Cardiac septum (tissue), 1 donor: ENCODE measurements at regions of chr4 and their contacts with region 1.

Region 1: GRCh38 chr4:52588097-52588782 is 70.9 kb downstream of the USP46 start:
- DNase-seq: no peak

Region 2: GRCh38 chr4:52507774-52508173 is 80.5 kb before region 1 on chr4:
- intact Hi-C with region 1: no loop called
- DNase-seq: no peak

Region 3: GRCh38 chr4:52545099-52546069 is 42.9 kb before region 1 on chr4:
- intact Hi-C with region 1: loop called (anchors 2 kb)
- DNase-seq: peak; percentile 84

Region 4: DNA sequence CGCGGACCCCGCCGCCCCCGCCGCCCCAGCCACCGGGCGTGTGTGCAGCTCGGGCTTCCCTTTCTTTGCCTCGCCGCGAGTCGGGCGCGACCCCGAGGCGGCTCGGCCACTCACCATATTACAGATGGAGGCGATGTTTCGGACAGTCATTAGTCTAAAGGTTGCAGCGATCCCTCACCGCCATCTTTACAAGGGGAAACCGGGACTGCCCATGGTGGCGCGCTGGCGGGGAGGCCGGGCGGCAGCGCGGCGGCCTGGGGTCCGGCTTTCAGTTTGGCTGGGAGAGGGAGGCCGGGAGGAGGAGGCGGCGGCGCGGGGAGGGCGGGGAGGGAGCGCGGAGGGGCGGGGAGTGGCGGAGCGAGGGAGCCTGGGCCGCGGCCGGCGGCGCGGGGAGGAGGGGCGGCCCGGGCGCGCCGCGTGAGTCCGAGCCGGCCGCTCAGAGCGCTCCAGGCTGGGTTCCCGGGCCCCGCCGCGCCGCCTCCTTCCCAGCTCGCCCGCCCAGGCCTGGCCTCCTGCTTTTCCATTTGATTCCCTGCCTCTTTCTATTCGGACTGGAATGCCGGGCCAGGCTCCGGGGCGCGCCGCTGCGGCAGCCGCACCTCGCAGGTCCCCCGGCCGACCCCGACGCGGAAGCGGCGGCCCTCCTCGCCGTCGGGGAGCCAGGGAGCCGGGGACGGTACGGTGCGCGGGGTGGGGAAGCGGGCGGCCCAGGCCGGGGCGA is 70.9 kb after region 1 on chr4 and contains the start of gene USP46:
- intact Hi-C with region 1: loop called (anchors 5 kb)
- DNase-seq: peak; percentile 90
- total RNA-seq, gene USP46: 111 TPM

Region 5: GRCh38 chr4:52712172-52712990 is 124.1 kb after region 1 on chr4:
- intact Hi-C with region 1: loop called (anchors 5 kb)
- DNase-seq: peak; percentile 98

Region 6: DNA sequence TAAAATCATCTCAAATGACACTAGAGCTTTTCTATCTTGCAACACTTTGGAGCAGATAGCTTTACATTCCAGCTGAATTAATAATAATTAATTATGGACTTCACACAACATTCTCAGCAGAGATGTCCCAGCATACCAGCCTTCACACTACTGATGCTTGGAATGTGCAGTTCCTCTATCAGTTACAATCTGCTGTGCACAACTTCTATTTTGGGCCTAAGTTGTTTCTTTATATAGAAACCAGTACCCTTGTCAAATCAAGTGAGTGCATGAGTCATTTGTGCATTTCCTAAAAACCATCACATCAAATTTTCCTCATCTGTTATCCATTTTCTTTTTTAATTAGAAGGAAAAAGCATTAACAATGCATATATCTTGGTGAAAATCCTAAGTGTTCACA is 265.1 kb after region 1 on chr4:
- intact Hi-C with region 1: no loop called
- DNase-seq: no peak

Region 7: DNA sequence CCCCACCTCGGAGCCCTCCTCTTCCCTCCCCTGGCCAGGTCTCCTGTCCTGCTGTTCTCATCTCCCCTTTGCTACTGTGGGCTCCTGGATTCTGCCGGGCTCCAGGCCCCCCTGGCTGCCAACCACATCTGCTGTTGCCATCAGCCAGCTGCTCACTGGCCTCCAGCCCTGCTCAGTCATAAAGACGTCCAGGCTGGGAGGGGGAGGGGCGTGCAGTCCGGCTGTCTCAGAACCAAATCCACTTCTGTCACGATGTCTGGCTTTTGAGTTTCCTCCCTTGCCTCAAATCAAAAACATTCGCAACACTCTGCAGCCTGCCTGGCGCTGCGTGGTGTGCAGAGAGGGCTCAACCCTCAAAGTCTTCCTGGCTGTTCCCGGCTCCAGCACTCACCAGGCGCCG is 281.0 kb after region 1 on chr4:
- intact Hi-C with region 1: loop called (anchors 5 kb)
- DNase-seq: peak; percentile 83

Region 8: GRCh38 chr4:52957220-52957686 is 369.0 kb after region 1 on chr4:
- intact Hi-C with region 1: loop called (anchors 5 kb)
- DNase-seq: no peak